ENCODE measurements at regions of chr11 and their contacts with region 1.

Region 1: DNA sequence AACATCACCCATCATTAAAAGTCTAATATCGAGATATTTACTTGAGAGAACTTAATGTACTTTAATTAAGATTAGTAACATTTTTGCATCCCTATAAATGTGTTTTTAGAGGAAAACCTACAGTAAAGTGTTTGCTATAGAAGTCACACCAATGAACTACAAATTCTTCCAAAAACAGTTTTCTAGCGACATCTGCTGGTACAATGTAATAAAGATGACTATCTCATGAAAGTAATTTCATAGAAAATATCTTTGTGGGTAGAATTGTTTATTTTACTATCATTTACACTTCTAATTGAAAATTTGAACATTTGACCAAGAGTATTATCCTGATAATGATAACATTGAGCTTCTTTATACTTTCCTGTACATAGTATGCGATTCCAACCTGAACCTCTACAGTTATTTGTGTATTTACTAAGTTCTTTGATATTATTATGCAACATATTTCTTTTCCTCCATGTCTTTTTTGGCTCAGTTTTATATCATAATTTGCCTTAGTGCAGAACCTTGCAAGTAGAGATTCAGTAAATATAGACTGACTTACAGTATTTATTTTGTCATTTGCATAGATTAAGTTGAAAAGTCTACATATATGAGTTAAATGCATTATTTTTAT is 252.7 kb downstream of the TMEM135 start:
- DNase-seq: no peak

Region 2: GRCh38 chr11:85863855-85864254 is 1426.6 kb before region 1 on chr11:
- intact Hi-C with region 1: loop called in 1 of 2 experiments (anchors 5 kb)
- DNase-seq: no peak

Region 3: DNA sequence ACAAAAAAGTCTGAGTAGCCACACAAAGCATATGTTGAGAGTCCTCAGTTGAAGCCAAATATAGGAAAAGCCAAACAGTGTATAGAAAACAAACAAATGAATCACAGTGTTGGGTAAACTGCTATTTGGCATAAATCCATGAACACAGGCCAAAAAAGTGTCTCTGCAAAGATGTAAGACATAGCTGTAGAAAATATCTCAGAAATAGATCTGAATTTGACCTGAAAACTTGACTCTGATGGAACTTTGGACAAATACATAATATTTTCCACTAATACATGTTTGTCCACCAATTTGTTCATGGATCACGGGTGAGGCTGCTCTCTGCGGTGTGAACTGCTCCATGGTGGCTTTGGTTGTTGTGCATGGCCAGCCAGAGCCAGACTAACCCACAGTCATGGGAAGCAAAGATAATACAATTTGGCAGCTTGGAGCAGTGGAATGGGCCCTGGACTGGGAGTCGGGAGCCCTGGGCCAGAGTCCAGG is 1122.8 kb before region 1 on chr11:
- intact Hi-C with region 1: no loop called
- DNase-seq: no peak

Region 4: GRCh38 chr11:86818466-86819192 is 471.8 kb before region 1 on chr11:
- intact Hi-C with region 1: no loop called
- DNase-seq: no peak

Region 5: DNA sequence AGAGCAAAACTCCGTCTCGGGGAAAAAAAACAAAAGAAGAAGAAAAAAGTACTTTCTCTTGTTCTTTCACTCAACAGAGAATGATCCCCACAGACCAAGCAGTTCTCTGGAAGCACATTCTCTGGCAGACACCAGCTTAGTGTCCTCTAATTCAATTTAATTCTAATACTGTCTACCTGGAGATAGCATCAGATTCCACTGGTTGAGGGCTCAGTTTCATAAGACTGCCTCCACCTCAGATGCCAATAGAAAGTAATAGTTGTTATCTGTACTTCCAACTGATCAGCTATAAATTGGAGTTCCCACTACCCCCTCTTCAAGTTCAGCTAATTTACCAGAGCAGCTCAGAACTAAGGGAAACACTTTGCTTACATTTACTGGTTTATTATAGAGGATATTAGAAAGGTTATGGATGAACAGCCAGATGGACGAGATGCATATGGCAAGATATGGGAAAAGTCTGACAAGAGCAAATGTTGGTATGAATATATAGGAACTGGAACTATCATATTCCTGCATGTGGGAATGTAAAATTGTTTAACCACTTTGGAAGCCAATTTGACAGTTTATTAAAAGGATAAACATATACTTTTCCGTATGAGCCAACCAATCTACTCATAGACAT is 188.3 kb before region 1 on chr11:
- intact Hi-C with region 1: no loop called
- DNase-seq: no peak

Region 6: GRCh38 chr11:87719326-87720073 is 429.1 kb after region 1 on chr11:
- intact Hi-C with region 1: no loop called
- DNase-seq: no peak

Measured in posterior vena cava (tissue), 2 donors.